ENCODE measurements at regions of chr2 and their contacts with region 1.

Region 1: GRCh38 chr2:128162266-128162665 is 71.3 kb downstream of the UGGT1 start:
- DNase-seq: no peak
- H3K4me3 Mint-ChIP-seq: no peak overlapping the region
- H3K27ac Mint-ChIP-seq: no peak overlapping the region
- H3K4me1 Mint-ChIP-seq: peaks cover 1% of the 10 kb centered on the region
- H3K27me3 Mint-ChIP-seq: no peaks in the 10 kb centered on the region

Region 2: GRCh38 chr2:128103407-128103806 is 58.9 kb before region 1 on chr2:
- intact Hi-C with region 1: loop called (anchors 5 kb)
- DNase-seq: no peak
- H3K4me3 Mint-ChIP-seq: no peak overlapping the region
- H3K27ac Mint-ChIP-seq: no peak overlapping the region
- H3K4me1 Mint-ChIP-seq: peaks cover 19% of the 10 kb centered on the region
- H3K27me3 Mint-ChIP-seq: no peaks in the 10 kb centered on the region